ENCODE measurements at regions of chr22 and their contacts with region 1.

Region 1: GRCh38 chr22:42444077-42444904 is 12.1 kb upstream of the NFAM1 start:
- DNase-seq: peak; percentile 82

Region 2: DNA sequence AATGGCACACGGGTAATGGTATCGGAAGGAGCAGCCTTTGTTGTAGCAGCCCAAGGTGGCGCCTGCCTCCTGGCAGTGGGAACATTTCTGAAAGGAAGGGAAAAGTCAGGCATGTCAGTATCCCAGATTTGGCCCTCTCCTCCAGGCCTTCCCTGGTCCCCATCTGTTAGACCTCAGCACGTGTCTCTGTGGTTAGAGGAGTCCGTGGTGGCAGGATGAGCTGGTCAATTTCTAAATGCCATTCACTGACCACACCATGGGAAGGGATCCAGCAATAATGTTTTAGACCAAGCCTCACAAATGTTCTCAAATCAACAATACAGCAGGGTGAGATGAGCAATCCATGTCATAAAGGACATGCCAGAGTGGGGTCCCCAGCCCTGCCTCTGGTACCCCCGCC is 264.7 kb before region 1 on chr22:
- in situ Hi-C with region 1: loop called (anchors 10 kb)
- DNase-seq: no peak